B cell (primary cell): ENCODE measurements at regions of chr5 and their contacts with region 1.

Region 1: DNA sequence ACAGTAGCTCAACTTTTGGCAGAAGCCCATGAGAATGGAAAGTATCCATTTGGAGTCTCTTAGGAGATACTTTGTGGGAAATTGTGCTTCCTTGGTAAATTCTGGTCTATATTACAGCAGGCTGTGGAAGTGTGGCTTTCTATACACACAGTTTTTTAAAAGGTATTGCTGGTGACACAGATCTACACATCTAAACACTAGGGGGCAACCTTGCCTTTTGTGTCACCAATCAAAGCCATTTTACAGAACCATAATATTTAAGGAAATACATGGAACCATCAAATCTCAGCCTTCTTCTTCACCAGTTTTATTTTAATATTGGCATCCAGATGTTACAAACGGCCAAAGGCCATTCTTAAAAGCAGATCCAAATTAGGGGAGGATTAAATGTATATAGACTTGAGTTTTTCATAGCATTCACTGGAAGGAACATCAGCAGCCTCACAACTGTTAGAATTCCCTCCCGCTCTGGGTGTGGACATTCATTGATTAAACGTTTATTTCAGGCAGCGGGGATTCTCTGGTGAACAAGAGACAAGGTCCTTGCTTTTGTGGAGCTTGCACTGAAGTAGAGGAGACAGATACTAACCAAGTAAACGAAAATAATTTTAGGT is 132.4 kb upstream of the EPB41L4A start:
- DNase-seq: peak; percentile 71
- ATAC-seq: peak; percentile 72
- H3K4me3 ChIP-seq: no peak overlapping the region
- H3K4me3 Mint-ChIP-seq: no peak overlapping the region
- H3K27ac ChIP-seq: no peak overlapping the region
- H3K27ac Mint-ChIP-seq: no peak overlapping the region
- H3K4me1 ChIP-seq: peaks cover 15 to 18% of the 10 kb centered on the region in 2 donors
- H3K4me1 Mint-ChIP-seq: peaks cover 26% of the 10 kb centered on the region
- H3K27me3 ChIP-seq: no peaks in the 10 kb centered on the region
- H3K27me3 Mint-ChIP-seq: no peaks in the 10 kb centered on the region
- CTCF ChIP-seq: peak; percentile 87

Region 2: GRCh38 chr5:112174959-112175594 is 376.4 kb before region 1 on chr5:
- CTCF ChIA-PET with region 1: interaction called, 22 read pairs
- POLR2A ChIA-PET with region 1: no interaction called
- intact Hi-C with region 1: no loop called
- DNase-seq: peak; percentile 70
- ATAC-seq: peak; percentile 64
- H3K4me3 ChIP-seq: no peak overlapping the region
- H3K4me3 Mint-ChIP-seq: no peak overlapping the region
- H3K27ac ChIP-seq: no peak overlapping the region
- H3K27ac Mint-ChIP-seq: no peak overlapping the region
- H3K4me1 ChIP-seq: peaks cover 3% of the 10 kb centered on the region in 2 donors
- H3K4me1 Mint-ChIP-seq: peaks cover 4% of the 10 kb centered on the region
- H3K27me3 ChIP-seq: no peaks in the 10 kb centered on the region
- H3K27me3 Mint-ChIP-seq: no peaks in the 10 kb centered on the region
- CTCF ChIP-seq: peak; percentile 86

Region 3: GRCh38 chr5:112492291-112492690 is 59.2 kb before region 1 on chr5:
- CTCF ChIA-PET with region 1: interaction called, 24 read pairs
- POLR2A ChIA-PET with region 1: no interaction called
- intact Hi-C with region 1: no loop called
- DNase-seq: peak; percentile 64
- ATAC-seq: peak; percentile 91
- H3K4me3 ChIP-seq: no peak overlapping the region
- H3K4me3 Mint-ChIP-seq: no peak overlapping the region
- H3K27ac ChIP-seq: no peak overlapping the region
- H3K27ac Mint-ChIP-seq: no peak overlapping the region
- H3K4me1 ChIP-seq: peaks cover 4% of the 10 kb centered on the region in 2 donors
- H3K4me1 Mint-ChIP-seq: peaks cover 7% of the 10 kb centered on the region
- H3K27me3 ChIP-seq: no peaks in the 10 kb centered on the region
- H3K27me3 Mint-ChIP-seq: peaks cover 10% of the 10 kb centered on the region
- CTCF ChIP-seq: peak; percentile 63

Region 4: GRCh38 chr5:112604732-112605630 is 53.5 kb after region 1 on chr5:
- CTCF ChIA-PET with region 1: interaction called, 46 read pairs
- POLR2A ChIA-PET with region 1: no interaction called
- intact Hi-C with region 1: loop called (anchors 1 kb)
- DNase-seq: peak; percentile 59
- ATAC-seq: peak; percentile 91
- H3K4me3 ChIP-seq: no peak overlapping the region
- H3K4me3 Mint-ChIP-seq: no peak overlapping the region
- H3K27ac ChIP-seq: no peak overlapping the region
- H3K27ac Mint-ChIP-seq: no peak overlapping the region
- H3K4me1 ChIP-seq: peaks cover 3 to 6% of the 10 kb centered on the region in 2 donors
- H3K4me1 Mint-ChIP-seq: peaks cover 9% of the 10 kb centered on the region
- H3K27me3 ChIP-seq: peaks cover 0 to 6% (median 0%) of the 10 kb centered on the region in 4 experiments
- H3K27me3 Mint-ChIP-seq: no peaks in the 10 kb centered on the region
- CTCF ChIP-seq: peak; percentile 26

Region 5: DNA sequence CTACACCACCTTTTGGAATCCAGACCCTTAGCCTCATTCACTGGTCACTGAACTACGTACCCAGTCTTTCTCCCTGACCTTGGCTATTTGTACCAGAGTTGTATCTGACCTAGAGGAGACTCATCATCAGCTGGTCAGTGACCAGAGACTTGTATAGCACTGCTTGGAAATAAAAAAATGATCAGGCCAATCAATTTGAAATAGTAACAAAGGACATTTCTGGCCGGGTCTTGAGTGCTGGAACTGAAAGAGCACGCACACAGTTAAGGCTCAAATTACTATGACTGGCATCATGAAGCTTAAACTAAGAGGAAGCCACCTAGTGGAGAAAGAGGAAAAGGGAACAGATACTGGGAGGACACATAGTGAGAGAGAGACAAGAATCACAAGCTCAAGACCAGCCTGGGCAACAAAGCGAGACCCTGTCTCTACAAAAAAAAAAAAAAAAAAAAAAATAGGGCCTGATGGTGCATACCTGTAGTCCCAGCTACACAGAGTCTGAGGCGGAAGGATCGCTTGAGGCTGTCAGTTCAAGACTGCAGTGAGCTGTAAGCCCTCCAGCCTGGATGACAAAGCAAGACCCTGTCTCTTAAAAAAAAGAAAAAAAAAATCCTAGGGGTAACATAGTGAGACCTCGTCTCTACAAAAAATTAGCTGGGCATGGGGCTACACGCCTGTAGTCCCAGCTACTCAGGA is 296.7 kb after region 1 on chr5:
- CTCF ChIA-PET with region 1: interaction called, 29 read pairs
- POLR2A ChIA-PET with region 1: no interaction called
- intact Hi-C with region 1: loop called (anchors 1 kb)
- DNase-seq: peak; percentile 77
- ATAC-seq: peak; percentile 100
- H3K4me3 ChIP-seq: no peak overlapping the region
- H3K4me3 Mint-ChIP-seq: peak overlapping the region; percentile 0
- H3K27ac ChIP-seq: no peak overlapping the region
- H3K27ac Mint-ChIP-seq: peak overlapping the region; percentile 39
- H3K4me1 ChIP-seq: peaks cover 0 to 9% of the 10 kb centered on the region in 2 donors
- H3K4me1 Mint-ChIP-seq: peaks cover 5% of the 10 kb centered on the region
- H3K27me3 ChIP-seq: no peaks in the 10 kb centered on the region
- H3K27me3 Mint-ChIP-seq: peaks cover 6% of the 10 kb centered on the region
- CTCF ChIP-seq: peak; percentile 83

Region 6: GRCh38 chr5:113330533-113331208 is 779.1 kb after region 1 on chr5:
- CTCF ChIA-PET with region 1: no interaction called
- POLR2A ChIA-PET with region 1: no interaction called
- intact Hi-C with region 1: loop called (anchors 10 kb)
- DNase-seq: peak; percentile 43
- ATAC-seq: peak; percentile 43
- H3K4me3 ChIP-seq: peak overlapping the region in 1 of 5 experiments; percentile 27
- H3K4me3 Mint-ChIP-seq: no peak overlapping the region
- H3K27ac ChIP-seq: no peak overlapping the region
- H3K27ac Mint-ChIP-seq: no peak overlapping the region
- H3K4me1 ChIP-seq: peaks cover 0 to 6% of the 10 kb centered on the region in 2 donors
- H3K4me1 Mint-ChIP-seq: peaks cover 5% of the 10 kb centered on the region
- H3K27me3 ChIP-seq: no peaks in the 10 kb centered on the region
- H3K27me3 Mint-ChIP-seq: peaks cover 6% of the 10 kb centered on the region
- CTCF ChIP-seq: peak; percentile 34

Region 7: DNA sequence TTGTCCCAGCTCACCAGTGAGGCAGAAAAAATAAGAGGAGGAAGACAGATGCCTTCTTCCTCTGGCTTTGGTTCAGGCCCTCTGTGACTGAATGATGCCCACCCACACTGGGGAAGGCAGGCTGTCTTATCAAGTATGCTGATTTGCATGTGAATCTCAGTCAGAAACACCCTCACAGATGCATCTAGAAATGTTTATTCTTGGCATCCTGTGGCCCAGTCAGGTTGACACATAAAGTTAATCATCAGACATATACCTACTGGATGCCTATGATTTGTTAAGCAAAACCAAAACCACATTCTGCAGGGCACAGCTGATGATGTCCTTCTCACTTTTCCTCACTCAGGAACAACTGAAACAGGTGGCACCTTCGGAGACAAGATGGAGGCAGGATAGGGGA is 1567.0 kb after region 1 on chr5:
- CTCF ChIA-PET with region 1: no interaction called
- POLR2A ChIA-PET with region 1: no interaction called
- intact Hi-C with region 1: no loop called
- DNase-seq: no peak
- ATAC-seq: no peak
- H3K4me3 ChIP-seq: no peak overlapping the region
- H3K4me3 Mint-ChIP-seq: no peak overlapping the region
- H3K27ac ChIP-seq: no peak overlapping the region
- H3K27ac Mint-ChIP-seq: no peak overlapping the region
- H3K4me1 ChIP-seq: no peaks in the 10 kb centered on the region
- H3K4me1 Mint-ChIP-seq: no peaks in the 10 kb centered on the region
- H3K27me3 ChIP-seq: no peaks in the 10 kb centered on the region
- H3K27me3 Mint-ChIP-seq: no peaks in the 10 kb centered on the region
- CTCF ChIP-seq: no peak